Activated CD4-positive, alpha-beta T cell treated with anti-CD3 and anti-CD28 coated beads, Interleukin-2, amount 10 ng/mL, durations not matched to agents 24 days and 14 days (primary cell): ENCODE measurements at regions of chr18 and their contacts with region 1.

Region 1: DNA sequence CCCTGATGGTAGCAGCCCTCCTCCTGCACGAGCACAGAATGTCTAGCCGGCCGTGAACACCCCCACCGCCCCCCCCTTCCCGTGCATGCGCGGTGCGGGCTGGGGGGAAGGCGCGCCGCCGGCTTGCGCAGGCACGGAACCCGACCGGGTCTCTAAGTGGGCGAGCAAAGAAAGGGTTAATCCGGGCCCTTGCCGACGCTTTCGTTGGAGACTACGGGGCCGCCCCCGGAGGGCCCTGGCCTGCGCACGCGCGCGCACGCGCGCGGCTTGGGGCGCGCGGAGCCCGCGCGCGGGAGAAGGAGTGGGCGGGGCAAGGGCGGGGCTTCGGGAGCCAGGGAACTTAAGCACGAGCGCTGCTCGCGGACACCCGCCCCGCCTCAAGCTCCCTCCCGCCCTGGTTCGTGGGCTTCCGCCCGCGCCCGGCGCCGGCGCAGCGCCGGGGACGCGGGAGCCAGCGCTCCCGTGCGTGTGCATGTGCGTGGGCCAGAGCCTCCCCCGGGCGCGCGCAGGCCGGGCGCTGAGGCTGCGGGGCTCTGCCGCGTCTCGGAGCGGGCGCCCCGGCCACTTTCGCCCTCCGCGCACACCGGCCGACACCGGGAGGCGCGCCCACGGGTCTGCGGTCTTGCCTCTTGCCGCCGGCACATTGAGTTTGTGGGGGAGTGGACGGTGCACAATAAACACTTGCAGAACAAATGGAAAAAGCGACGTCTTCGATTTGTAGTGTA is 617 bp upstream of the ZBTB14 start:
- DNase-seq: peak; percentile 97
- H3K4me3 Mint-ChIP-seq: peak overlapping the region; percentile 95
- H3K27ac Mint-ChIP-seq: peak overlapping the region; percentile 98
- H3K4me1 Mint-ChIP-seq: peaks cover 34% of the 10 kb centered on the region
- H3K27me3 Mint-ChIP-seq: peaks cover 17% of the 10 kb centered on the region

Region 2: GRCh38 chr18:5237723-5238370 is 58.3 kb before region 1 on chr18:
- intact Hi-C with region 1: loop called (anchors 1 kb)
- DNase-seq: peak; percentile 97
- H3K4me3 Mint-ChIP-seq: peak overlapping the region; percentile 92
- H3K27ac Mint-ChIP-seq: peak overlapping the region; percentile 99
- H3K4me1 Mint-ChIP-seq: peaks cover 30% of the 10 kb centered on the region
- H3K27me3 Mint-ChIP-seq: peaks cover 3% of the 10 kb centered on the region

Region 3: DNA sequence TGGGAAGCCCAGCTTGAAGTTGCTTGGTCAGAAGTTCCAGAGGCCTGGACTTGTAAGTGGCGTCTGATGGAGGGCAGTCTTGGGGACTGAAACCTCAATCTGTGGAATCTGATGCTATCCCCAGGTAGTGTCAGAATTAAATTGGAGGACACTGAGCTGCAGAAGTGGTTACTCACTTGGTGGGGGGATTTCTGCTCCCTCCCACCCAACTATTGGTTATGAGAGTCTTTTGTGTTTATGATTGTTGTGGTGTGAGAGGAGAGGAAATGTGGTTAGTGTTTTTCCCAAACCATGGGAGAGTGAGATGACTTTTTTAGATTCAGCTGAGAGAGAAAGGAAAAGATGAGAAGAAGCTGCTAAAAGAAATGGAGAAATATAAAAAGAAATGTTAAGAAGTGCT is 13.4 kb before region 1 on chr18:
- intact Hi-C with region 1: loop called (anchors 1 kb)
- DNase-seq: no peak
- H3K4me3 Mint-ChIP-seq: no peak overlapping the region
- H3K27ac Mint-ChIP-seq: peak overlapping the region; percentile 12
- H3K4me1 Mint-ChIP-seq: peaks cover 8% of the 10 kb centered on the region
- H3K27me3 Mint-ChIP-seq: no peaks in the 10 kb centered on the region

Region 4: GRCh38 chr18:5309888-5310470 is 13.8 kb after region 1 on chr18:
- intact Hi-C with region 1: loop called (anchors 1 kb)
- DNase-seq: peak; percentile 81
- H3K4me3 Mint-ChIP-seq: peak overlapping the region; percentile 69
- H3K27ac Mint-ChIP-seq: peak overlapping the region; percentile 6
- H3K4me1 Mint-ChIP-seq: peaks cover 12% of the 10 kb centered on the region
- H3K27me3 Mint-ChIP-seq: peaks cover 1% of the 10 kb centered on the region

Region 5: GRCh38 chr18:5456577-5457463 is 160.7 kb after region 1 on chr18:
- intact Hi-C with region 1: loop called (anchors 10 kb)
- DNase-seq: peak; percentile 65
- H3K4me3 Mint-ChIP-seq: peak overlapping the region; percentile 67
- H3K27ac Mint-ChIP-seq: peak overlapping the region; percentile 79
- H3K4me1 Mint-ChIP-seq: peaks cover 10% of the 10 kb centered on the region
- H3K27me3 Mint-ChIP-seq: peaks cover 4% of the 10 kb centered on the region